MCF 10A (cell line): ENCODE measurements at regions of chr2 and their contacts with region 1.

Region 1: DNA sequence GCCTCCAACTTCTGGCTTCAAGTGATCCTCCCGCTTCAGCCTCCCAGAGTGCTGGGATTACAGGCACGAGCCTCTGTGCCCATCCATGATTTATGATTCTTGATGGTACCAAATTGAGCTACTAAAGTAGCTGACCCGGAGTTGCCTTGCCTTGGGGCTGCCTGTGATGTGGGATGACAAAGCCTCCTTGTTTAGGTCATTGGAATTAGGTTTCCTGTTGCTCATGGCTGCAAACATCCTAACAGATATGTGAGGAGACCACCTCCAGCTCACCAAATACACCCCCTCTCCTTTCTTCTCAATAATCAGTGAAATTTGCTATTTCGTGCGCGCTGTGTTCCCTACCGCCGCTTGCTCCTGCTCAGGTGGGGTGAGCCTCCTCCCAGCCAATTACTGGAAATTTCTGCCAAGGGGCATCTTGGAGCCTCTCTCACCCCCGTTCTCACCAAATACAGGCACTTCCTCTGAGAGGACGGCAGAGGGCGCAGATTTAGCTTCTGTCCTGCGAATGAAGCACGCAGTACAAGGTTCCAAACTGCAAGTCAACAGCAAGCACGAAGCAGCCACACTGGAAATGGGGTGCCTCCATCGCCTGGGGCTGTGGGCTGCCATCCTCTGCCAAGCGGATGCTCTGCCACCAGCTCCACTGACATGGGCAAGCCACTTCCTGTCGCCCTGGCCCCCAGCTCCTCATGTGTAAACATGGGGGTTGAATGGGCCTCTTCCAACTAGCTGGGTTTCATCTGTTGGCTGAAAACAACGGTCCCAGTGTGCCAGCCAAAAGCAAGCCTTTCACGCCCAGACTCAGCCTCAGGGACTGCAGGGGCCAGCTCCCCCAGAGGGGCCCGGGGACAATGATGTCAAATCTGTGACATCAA is 71.7 kb downstream of the NCAPH start:
- DNase-seq: peak; percentile 76
- H3K4me3 Mint-ChIP-seq: no peak overlapping the region
- H3K27ac Mint-ChIP-seq: no peak overlapping the region
- H3K4me1 Mint-ChIP-seq: peaks cover 17% of the 10 kb centered on the region
- H3K27me3 Mint-ChIP-seq: peaks cover 12% of the 10 kb centered on the region
- CTCF ChIP-seq: peak; percentile 72

Region 2: DNA sequence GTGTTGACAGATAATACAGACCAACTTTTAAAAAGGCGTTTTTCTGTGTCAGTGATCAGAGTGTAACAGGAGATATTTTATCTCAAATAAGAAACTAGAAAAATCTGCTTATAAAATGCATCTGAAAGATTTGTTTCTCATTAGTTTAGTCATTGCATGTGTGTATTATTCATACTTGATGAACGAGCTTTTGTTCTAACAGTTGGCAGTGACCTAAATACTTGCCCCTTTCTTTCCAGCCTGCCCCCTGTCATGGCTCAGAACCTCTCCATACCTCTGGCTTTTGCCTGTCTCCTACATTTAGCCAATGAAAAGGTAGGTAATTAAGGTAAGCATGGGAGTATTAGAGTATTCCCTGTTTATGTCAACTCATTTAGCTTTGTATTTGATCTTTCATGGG is 38.1 kb before region 1 on chr2:
- CTCF ChIA-PET with region 1: interaction called, 10 read pairs
- POLR2A ChIA-PET with region 1: no interaction called
- intact Hi-C with region 1: no loop called
- DNase-seq: no peak
- H3K4me3 Mint-ChIP-seq: no peak overlapping the region
- H3K27ac Mint-ChIP-seq: peak overlapping the region; percentile 20
- H3K4me1 Mint-ChIP-seq: no peaks in the 10 kb centered on the region
- H3K27me3 Mint-ChIP-seq: no peaks in the 10 kb centered on the region
- CTCF ChIP-seq: no peak

Region 3: GRCh38 chr2:96427917-96428316 is 20.6 kb after region 1 on chr2:
- CTCF ChIA-PET with region 1: interaction called, 10 read pairs
- POLR2A ChIA-PET with region 1: no interaction called
- intact Hi-C with region 1: no loop called
- DNase-seq: peak; percentile 95
- H3K4me3 Mint-ChIP-seq: no peak overlapping the region
- H3K27ac Mint-ChIP-seq: peak overlapping the region; percentile 60
- H3K4me1 Mint-ChIP-seq: peaks cover 10% of the 10 kb centered on the region
- H3K27me3 Mint-ChIP-seq: no peaks in the 10 kb centered on the region
- CTCF ChIP-seq: no peak

Region 4: GRCh38 chr2:96493072-96493471 is 85.8 kb after region 1 on chr2:
- CTCF ChIA-PET with region 1: interaction called, 10 read pairs
- POLR2A ChIA-PET with region 1: no interaction called
- intact Hi-C with region 1: no loop called
- DNase-seq: peak; percentile 86
- H3K4me3 Mint-ChIP-seq: no peak overlapping the region
- H3K27ac Mint-ChIP-seq: no peak overlapping the region
- H3K4me1 Mint-ChIP-seq: peaks cover 5% of the 10 kb centered on the region
- H3K27me3 Mint-ChIP-seq: peaks cover 13% of the 10 kb centered on the region
- CTCF ChIP-seq: no peak

Region 5: GRCh38 chr2:96554293-96555145 is 147.2 kb after region 1 on chr2:
- CTCF ChIA-PET with region 1: interaction called, 50 read pairs
- POLR2A ChIA-PET with region 1: no interaction called
- intact Hi-C with region 1: loop called (anchors 1 kb)
- DNase-seq: peak; percentile 58
- H3K4me3 Mint-ChIP-seq: no peak overlapping the region
- H3K27ac Mint-ChIP-seq: no peak overlapping the region
- H3K4me1 Mint-ChIP-seq: peaks cover 7% of the 10 kb centered on the region
- H3K27me3 Mint-ChIP-seq: no peaks in the 10 kb centered on the region
- CTCF ChIP-seq: peak; percentile 89